ENCODE measurements at regions of chr5 and their contacts with region 1.

Region 1: GRCh38 chr5:126852091-126852571 is 75.2 kb downstream of the LMNB1 start:
- DNase-seq: peak in 7 of 9 donors; percentile 38 to 72 (median 63)
- ATAC-seq: peak; percentile 81
- H3K4me3 ChIP-seq: peak overlapping the region; percentile 13
- H3K4me3 Mint-ChIP-seq: peak overlapping the region; percentile 71 to 91 (median 84)
- H3K27ac ChIP-seq: peak overlapping the region; percentile 67
- H3K27ac Mint-ChIP-seq: peak overlapping the region; percentile 95 to 99 (median 99)
- H3K4me1 ChIP-seq: peaks cover 12 to 33% of the 10 kb centered on the region in 2 donors
- H3K4me1 Mint-ChIP-seq: peaks cover 23 to 76% (median 67%) of the 10 kb centered on the region in 7 donors
- H3K27me3 ChIP-seq: no peaks in the 10 kb centered on the region
- H3K27me3 Mint-ChIP-seq: no peaks in the 10 kb centered on the region

Region 2: DNA sequence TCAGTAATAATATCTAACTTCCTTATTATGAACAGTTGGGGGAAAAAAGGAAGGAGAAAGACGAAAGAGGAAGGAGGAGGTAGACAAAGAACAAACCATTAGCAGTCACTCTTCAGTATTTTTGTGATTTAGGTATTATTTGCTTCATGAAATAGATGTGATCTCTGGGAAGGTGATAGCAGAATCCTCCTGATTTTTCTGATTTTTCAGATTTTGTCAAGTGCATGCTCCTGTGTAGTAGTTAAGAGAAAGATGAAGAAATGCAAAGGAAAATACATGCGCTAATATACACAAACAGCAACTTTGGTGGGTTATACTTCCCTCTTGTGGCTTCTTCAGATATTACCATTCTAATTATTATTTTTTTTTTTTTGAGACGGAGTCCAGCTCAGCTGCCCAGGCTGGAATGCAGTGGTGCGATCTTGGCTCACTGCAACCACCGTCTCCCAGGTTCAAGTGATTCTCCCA is 43.6 kb before region 1 on chr5:
- CTCF ChIA-PET with region 1: no interaction called
- POLR2A ChIA-PET with region 1: interaction called, 5 read pairs
- intact Hi-C with region 1: loop called (anchors 2 to 5 kb)
- DNase-seq: peak in 5 of 9 donors; percentile 17 to 37 (median 22)
- ATAC-seq: peak; percentile 52
- H3K4me3 ChIP-seq: no peak overlapping the region
- H3K4me3 Mint-ChIP-seq: no peak overlapping the region
- H3K27ac ChIP-seq: no peak overlapping the region
- H3K27ac Mint-ChIP-seq: peak overlapping the region in 4 of 9 donors; percentile 10 to 95 (median 38)
- H3K4me1 ChIP-seq: peaks cover 8 to 11% of the 10 kb centered on the region in 2 donors
- H3K4me1 Mint-ChIP-seq: peaks cover 0 to 58% (median 24%) of the 10 kb centered on the region in 7 donors
- H3K27me3 ChIP-seq: no peaks in the 10 kb centered on the region
- H3K27me3 Mint-ChIP-seq: no peaks in the 10 kb centered on the region

Region 3: DNA sequence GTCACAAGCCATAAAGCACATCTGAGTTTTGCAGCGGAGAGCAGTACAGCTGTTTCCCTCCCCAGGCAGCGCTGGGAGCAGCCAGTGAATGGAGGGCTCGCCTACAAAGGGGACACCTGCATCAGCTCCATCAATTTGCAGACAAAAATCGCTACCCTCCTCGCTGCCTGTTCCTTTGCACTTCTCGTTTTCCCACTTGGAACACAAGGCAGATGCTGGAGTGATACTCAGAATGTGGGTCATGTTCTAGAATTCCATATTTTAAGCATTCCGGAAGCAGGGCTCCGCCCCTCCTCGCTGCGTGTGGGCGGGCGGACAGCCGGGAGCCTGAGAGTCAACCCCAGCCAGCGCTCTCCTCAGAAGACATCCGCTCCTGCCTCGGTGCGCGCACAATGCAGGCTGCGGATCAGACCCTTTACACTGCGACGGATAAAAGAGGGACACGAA is 16.9 kb after region 1 on chr5:
- CTCF ChIA-PET with region 1: interaction called, 5 read pairs
- POLR2A ChIA-PET with region 1: interaction called, 14 read pairs
- intact Hi-C with region 1: loop called in 1 of 2 experiments (anchors 2 kb)
- DNase-seq: peak in 4 of 9 donors; percentile 34 to 45 (median 38)
- ATAC-seq: peak; percentile 77
- H3K4me3 ChIP-seq: peak overlapping the region; percentile 26
- H3K4me3 Mint-ChIP-seq: peak overlapping the region; percentile 77 to 90 (median 86)
- H3K27ac ChIP-seq: no peak overlapping the region
- H3K27ac Mint-ChIP-seq: peak overlapping the region in 6 of 9 donors; percentile 22 to 91 (median 76)
- H3K4me1 ChIP-seq: peaks cover 0 to 12% of the 10 kb centered on the region in 2 donors
- H3K4me1 Mint-ChIP-seq: peaks cover 8 to 15% (median 11%) of the 10 kb centered on the region in 7 donors
- H3K27me3 ChIP-seq: no peaks in the 10 kb centered on the region
- H3K27me3 Mint-ChIP-seq: no peaks in the 10 kb centered on the region

Region 4: GRCh38 chr5:126988021-126988569 is 136.0 kb after region 1 on chr5:
- CTCF ChIA-PET with region 1: no interaction called
- POLR2A ChIA-PET with region 1: interaction called, 4 read pairs
- intact Hi-C with region 1: loop called (anchors 1 to 5 kb)
- DNase-seq: peak in 8 of 9 donors; percentile 30 to 81 (median 72)
- ATAC-seq: peak; percentile 94
- H3K4me3 ChIP-seq: no peak overlapping the region
- H3K4me3 Mint-ChIP-seq: peak overlapping the region; percentile 59 to 85 (median 76)
- H3K27ac ChIP-seq: peak overlapping the region; percentile 74
- H3K27ac Mint-ChIP-seq: peak overlapping the region; percentile 79 to 99 (median 94)
- H3K4me1 ChIP-seq: peaks cover 0 to 23% of the 10 kb centered on the region in 2 donors
- H3K4me1 Mint-ChIP-seq: peaks cover 24 to 78% (median 53%) of the 10 kb centered on the region in 7 donors
- H3K27me3 ChIP-seq: no peaks in the 10 kb centered on the region
- H3K27me3 Mint-ChIP-seq: no peaks in the 10 kb centered on the region

Region 5: GRCh38 chr5:127229185-127229889 is 377.2 kb after region 1 on chr5:
- CTCF ChIA-PET with region 1: no interaction called
- POLR2A ChIA-PET with region 1: interaction called, 5 read pairs
- intact Hi-C with region 1: loop called in 1 of 2 experiments (anchors 10 kb)
- DNase-seq: peak; percentile 28 to 68 (median 64)
- ATAC-seq: peak; percentile 83
- H3K4me3 ChIP-seq: peak overlapping the region; percentile 66
- H3K4me3 Mint-ChIP-seq: peak overlapping the region; percentile 73 to 88 (median 80)
- H3K27ac ChIP-seq: peak overlapping the region; percentile 62
- H3K27ac Mint-ChIP-seq: peak overlapping the region; percentile 36 to 88 (median 84)
- H3K4me1 ChIP-seq: peaks cover 0 to 15% of the 10 kb centered on the region in 2 donors
- H3K4me1 Mint-ChIP-seq: peaks cover 7 to 28% (median 18%) of the 10 kb centered on the region in 7 donors
- H3K27me3 ChIP-seq: no peaks in the 10 kb centered on the region
- H3K27me3 Mint-ChIP-seq: peaks cover 0 to 5% (median 0%) of the 10 kb centered on the region in 5 donors